ENCODE measurements at regions of chr3 and their contacts with region 1.

Region 1: DNA sequence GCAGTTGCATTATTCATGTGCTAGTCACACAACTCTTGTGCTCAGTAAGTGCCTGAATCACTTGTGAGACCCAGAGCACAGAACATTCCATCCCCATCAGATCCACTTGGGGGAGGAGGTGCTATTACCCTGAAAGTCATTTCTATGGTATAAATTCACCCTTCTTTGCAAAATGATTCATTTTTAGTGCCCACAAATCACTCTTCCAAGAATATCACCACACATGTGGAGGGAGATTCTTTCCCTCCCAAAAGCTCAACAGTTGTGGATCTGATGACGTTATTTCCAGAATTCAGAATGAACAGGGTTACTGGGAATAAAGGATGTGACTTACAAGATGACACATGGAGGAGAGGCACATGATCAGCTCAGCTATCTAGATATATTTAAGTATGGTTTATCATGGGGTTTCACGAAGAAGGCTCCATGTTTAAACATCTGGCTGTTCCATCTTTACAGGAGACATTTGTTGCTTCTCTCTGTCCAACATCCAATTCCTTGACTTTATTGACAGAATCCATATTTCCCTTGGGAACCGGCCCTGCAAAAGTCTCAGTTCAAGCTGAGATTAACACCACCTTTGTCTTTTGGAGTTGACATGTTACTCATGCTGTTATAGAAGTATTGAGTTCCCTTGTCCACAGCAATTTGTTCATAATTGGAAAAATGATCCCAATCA is 214.2 kb upstream of the PROK2 start:
- DNase-seq: no peak
- ATAC-seq: no peak
- H3K4me3 ChIP-seq: no peak overlapping the region
- H3K27ac ChIP-seq: no peak overlapping the region
- H3K4me1 ChIP-seq: no peaks in the 10 kb centered on the region
- H3K27me3 ChIP-seq: no peaks in the 10 kb centered on the region
- CTCF ChIP-seq: no peak
- EP300 ChIP-seq: no peak
- POLR2A ChIP-seq: no peak
- RAD21 ChIP-seq: no peak

Region 2: DNA sequence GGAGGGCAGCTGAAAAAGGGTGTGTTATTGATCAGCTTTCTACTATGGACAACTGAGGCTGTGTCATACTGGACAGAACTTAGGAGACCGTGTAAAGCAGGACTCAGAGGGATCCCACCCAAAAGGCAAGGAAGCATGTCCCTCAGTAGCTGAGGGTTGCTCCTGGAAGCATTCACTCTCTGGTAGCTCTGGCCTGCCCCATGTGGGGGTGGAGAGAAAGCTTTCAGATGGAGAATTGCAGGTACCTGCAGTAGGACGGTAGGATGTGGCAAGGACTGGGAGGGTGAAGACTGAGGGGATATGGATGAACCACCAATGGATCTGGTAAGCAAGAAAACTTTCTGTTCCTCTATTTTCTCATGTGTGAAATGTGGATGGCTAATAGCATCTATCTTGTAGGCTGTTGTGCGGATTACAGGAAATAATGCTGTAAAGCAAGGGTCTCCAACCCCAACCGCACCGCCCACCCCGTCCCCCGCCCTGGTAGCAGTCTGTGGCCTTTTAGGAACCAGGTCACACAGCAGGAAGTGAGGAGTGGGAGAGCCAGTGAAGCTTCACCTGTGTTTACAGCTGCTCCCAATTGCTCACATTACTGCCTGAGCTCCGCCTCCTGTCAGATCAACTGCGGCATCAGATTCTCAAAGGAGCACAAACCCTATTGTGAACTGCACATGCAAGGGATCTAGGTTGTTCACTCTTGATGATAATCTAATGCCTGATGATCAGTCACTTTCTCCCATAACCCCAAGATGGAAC is 56.5 kb before region 1 on chr3:
- CTCF ChIA-PET with region 1: no interaction called
- POLR2A ChIA-PET with region 1: no interaction called
- RAD21 ChIA-PET with region 1: no interaction called
- SMC1A ChIA-PET with region 1: no interaction called
- in situ Hi-C with region 1: no loop called
- intact Hi-C with region 1: no loop called
- DNase-seq: no peak
- ATAC-seq: no peak
- H3K4me3 ChIP-seq: no peak overlapping the region
- H3K27ac ChIP-seq: no peak overlapping the region
- H3K4me1 ChIP-seq: no peaks in the 10 kb centered on the region
- H3K27me3 ChIP-seq: no peaks in the 10 kb centered on the region
- CTCF ChIP-seq: no peak
- EP300 ChIP-seq: no peak
- POLR2A ChIP-seq: no peak
- RAD21 ChIP-seq: no peak

Region 3: GRCh38 chr3:71978150-71978721 is 20.9 kb before region 1 on chr3:
- CTCF ChIA-PET with region 1: no interaction called
- POLR2A ChIA-PET with region 1: no interaction called
- RAD21 ChIA-PET with region 1: no interaction called
- SMC1A ChIA-PET with region 1: interaction called, 13 read pairs
- in situ Hi-C with region 1: no loop called
- intact Hi-C with region 1: no loop called
- DNase-seq: peak; percentile 81
- ATAC-seq: peak; percentile 90
- H3K4me3 ChIP-seq: peak overlapping the region; percentile 40; the same call in 1 of the 2 replicates
- H3K27ac ChIP-seq: peak overlapping the region; percentile 78
- H3K4me1 ChIP-seq: peaks cover 39% of the 10 kb centered on the region
- H3K27me3 ChIP-seq: no peaks in the 10 kb centered on the region
- CTCF ChIP-seq: no peak
- EP300 ChIP-seq: peak; percentile 52 to 59; a peak in 2 of 4 replicates
- POLR2A ChIP-seq: no peak
- RAD21 ChIP-seq: 0 out of 2 replicates have a peak, but pooled peaks have one; percentile 12

Measured in GM12878 (cell line).